RWPE1 (cell line): ENCODE measurements at regions of chr18 and their contacts with region 1.

Region 1: DNA sequence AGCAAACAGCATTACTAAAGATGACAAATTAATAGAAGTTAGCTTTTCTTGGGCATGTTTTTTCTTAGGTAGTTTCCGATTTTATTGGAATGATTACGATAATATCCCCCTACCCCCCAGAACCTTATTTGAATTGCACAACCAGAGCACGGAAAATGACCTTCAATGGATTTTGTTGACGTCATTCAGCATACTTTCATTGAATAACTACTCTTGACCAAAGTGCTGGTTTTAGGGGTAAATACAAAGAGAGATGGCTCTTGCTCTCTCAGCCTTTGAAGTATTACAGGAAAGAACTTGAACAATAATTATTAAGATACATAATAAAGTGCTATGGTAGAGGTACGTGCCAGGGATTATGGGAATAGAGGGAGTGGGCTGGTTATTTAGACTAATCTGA is 36.0 kb downstream of the VAPA start:
- DNase-seq: no peak
- H3K27ac ChIP-seq: no peak overlapping the region
- CTCF ChIP-seq: no peak

Region 2: DNA sequence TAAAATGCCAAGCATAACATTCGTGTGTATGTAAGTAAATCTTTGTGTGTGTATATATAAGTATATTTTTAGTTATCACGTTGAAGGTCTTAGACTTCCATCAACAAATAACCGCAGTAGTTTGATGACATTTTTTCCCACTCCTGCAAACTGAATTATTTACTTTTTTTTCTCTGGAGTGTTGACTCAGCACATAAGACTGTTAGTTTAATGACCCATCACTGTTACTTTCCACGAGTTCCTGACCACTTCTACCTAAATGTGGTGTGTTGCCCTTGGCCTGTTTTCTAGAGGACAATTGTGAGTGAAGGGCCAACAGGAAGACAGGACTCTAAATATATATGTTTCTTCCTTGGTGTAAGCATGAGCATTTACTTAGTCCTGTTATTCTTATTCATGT is 135.4 kb before region 1 on chr18:
- CTCF ChIA-PET with region 1: no interaction called
- POLR2A ChIA-PET with region 1: interaction called, 11 read pairs
- DNase-seq: no peak
- H3K27ac ChIP-seq: no peak overlapping the region
- CTCF ChIP-seq: no peak

Region 3: GRCh38 chr18:10153924-10154752 is 204.3 kb after region 1 on chr18:
- CTCF ChIA-PET with region 1: no interaction called
- POLR2A ChIA-PET with region 1: no interaction called
- DNase-seq: no peak
- H3K27ac ChIP-seq: no peak overlapping the region
- CTCF ChIP-seq: no peak

Region 4: GRCh38 chr18:10234912-10235660 is 285.2 kb after region 1 on chr18:
- CTCF ChIA-PET with region 1: no interaction called
- POLR2A ChIA-PET with region 1: no interaction called
- DNase-seq: peak; percentile 50
- H3K27ac ChIP-seq: no peak overlapping the region
- CTCF ChIP-seq: no peak